CD4-positive, alpha-beta memory T cell (primary cell): ENCODE measurements at regions of chr17 and their contacts with region 1.

Region 1: GRCh38 chr17:14926526-14927122 is 338.5 kb downstream of the PMP22 start:
- DNase-seq: peak; percentile 48 to 55 (median 52)
- H3K4me3 ChIP-seq: no peak overlapping the region
- H3K4me3 Mint-ChIP-seq: no peak overlapping the region
- H3K27ac ChIP-seq: no peak overlapping the region
- H3K27ac Mint-ChIP-seq: no peak overlapping the region
- H3K4me1 ChIP-seq: no peaks in the 10 kb centered on the region
- H3K4me1 Mint-ChIP-seq: no peaks in the 10 kb centered on the region
- H3K27me3 ChIP-seq: no peaks in the 10 kb centered on the region
- H3K27me3 Mint-ChIP-seq: peaks cover 6 to 7% of the 10 kb centered on the region in 2 donors

Region 2: DNA sequence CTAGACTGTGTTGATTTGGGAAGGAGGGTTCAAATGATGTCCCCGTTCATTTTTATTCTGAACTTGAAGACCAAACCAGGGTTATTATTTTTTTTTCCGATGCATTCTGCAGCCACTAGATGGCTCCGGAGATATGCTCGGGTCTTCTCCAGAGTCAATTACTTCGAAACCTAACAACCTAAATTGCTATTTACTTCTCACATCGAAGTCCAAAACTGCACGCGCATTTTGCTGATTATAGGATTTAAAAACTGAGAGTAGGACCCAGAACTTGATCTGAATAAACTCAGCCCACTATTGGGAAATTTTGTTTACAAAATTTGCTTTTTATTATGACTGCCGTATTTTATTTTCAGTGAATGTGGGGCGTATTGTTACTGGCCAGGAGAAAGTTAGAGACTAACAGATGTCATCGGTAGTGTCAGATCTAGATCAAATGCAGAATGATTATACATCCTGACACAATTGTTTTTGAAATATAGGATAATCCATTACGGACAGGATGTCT is 1588.7 kb before region 1 on chr17:
- CTCF ChIA-PET with region 1: interaction called, 21 read pairs
- POLR2A ChIA-PET with region 1: no interaction called
- intact Hi-C with region 1: no loop called
- DNase-seq: peak in 4 of 5 donors; percentile 17 to 20 (median 18)
- H3K4me3 ChIP-seq: no peak overlapping the region
- H3K4me3 Mint-ChIP-seq: peak overlapping the region in 4 of 8 donors; percentile 1 to 49 (median 24)
- H3K27ac ChIP-seq: no peak overlapping the region
- H3K27ac Mint-ChIP-seq: no peak overlapping the region
- H3K4me1 ChIP-seq: peaks cover 4% of the 10 kb centered on the region
- H3K4me1 Mint-ChIP-seq: peaks cover 0 to 7% (median 2%) of the 10 kb centered on the region in 4 donors
- H3K27me3 ChIP-seq: no peaks in the 10 kb centered on the region
- H3K27me3 Mint-ChIP-seq: peaks cover 18 to 22% of the 10 kb centered on the region in 2 donors

Region 3: GRCh38 chr17:13587487-13588338 is 1338.9 kb before region 1 on chr17:
- CTCF ChIA-PET with region 1: interaction called, 49 read pairs
- POLR2A ChIA-PET with region 1: no interaction called
- intact Hi-C with region 1: no loop called
- DNase-seq: no peak
- H3K4me3 ChIP-seq: no peak overlapping the region
- H3K4me3 Mint-ChIP-seq: no peak overlapping the region
- H3K27ac ChIP-seq: no peak overlapping the region
- H3K27ac Mint-ChIP-seq: no peak overlapping the region
- H3K4me1 ChIP-seq: no peaks in the 10 kb centered on the region
- H3K4me1 Mint-ChIP-seq: peaks cover 0 to 3% (median 0%) of the 10 kb centered on the region in 4 donors
- H3K27me3 ChIP-seq: no peaks in the 10 kb centered on the region
- H3K27me3 Mint-ChIP-seq: peaks cover 8 to 11% of the 10 kb centered on the region in 2 donors

Region 4: DNA sequence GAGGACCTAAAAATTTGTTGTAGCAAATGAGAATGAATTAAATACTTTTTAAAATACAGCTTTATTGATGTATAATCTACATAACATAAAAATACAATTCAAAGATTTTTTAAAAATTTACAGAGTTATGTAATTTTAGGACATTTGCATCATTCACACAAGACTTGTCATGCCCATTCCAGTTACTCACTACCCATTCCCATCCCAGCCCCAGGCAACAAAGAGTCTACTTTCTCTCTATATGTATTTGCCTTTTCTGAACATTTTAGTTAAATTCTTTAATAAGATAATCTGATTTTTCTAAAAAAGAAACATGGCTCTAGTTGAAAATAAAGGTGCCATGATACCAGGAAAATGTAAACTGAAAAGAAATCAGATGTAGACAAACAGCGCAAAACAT is 15.7 kb before region 1 on chr17:
- CTCF ChIA-PET with region 1: no interaction called
- POLR2A ChIA-PET with region 1: no interaction called
- intact Hi-C with region 1: no loop called
- DNase-seq: no peak
- H3K4me3 ChIP-seq: no peak overlapping the region
- H3K4me3 Mint-ChIP-seq: no peak overlapping the region
- H3K27ac ChIP-seq: no peak overlapping the region
- H3K27ac Mint-ChIP-seq: no peak overlapping the region
- H3K4me1 ChIP-seq: no peaks in the 10 kb centered on the region
- H3K4me1 Mint-ChIP-seq: peaks cover 0 to 2% (median 0%) of the 10 kb centered on the region in 4 donors
- H3K27me3 ChIP-seq: no peaks in the 10 kb centered on the region
- H3K27me3 Mint-ChIP-seq: peaks cover 7 to 22% of the 10 kb centered on the region in 2 donors

Region 5: DNA sequence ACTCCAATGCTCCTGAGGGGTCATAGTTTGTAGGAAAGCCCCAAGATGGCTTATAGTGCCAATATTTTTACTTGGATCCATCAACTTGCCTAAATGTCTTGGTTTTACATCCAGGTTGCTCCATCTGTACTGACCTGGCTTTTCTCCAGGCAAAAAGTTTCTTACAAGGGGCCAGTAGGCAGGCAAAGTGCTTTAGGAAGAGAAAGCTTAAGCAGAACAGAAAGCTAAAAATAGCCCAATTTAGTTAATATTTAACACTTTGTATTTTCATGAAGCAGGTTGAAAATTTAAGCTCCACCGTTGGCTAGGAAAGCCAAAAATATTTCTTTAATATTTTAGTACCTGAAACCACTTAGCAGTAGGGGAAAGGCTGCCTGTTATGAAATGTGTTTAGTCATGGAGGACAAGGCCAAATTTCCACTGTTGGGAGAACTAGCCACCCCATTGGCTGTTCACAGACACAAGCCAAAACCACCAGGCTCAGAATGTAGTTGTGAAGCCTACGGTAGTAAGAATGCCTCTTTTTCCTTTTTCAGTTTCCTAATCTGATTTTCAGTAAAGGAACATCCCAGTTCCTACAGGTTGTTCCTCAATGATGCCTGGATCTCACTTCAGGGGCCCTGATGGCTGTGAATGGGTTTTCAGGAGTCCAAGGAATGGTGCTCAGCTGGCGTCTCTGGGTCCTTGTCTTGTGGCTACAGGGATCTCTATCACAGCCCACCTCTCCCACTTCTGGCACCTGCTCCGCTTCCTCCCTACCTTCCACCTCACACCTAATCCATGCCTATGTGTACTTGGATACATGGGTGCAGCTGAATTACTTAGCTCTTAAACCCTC is 13.7 kb after region 1 on chr17:
- CTCF ChIA-PET with region 1: interaction called, 17 read pairs
- POLR2A ChIA-PET with region 1: no interaction called
- intact Hi-C with region 1: no loop called
- DNase-seq: no peak
- H3K4me3 ChIP-seq: no peak overlapping the region
- H3K4me3 Mint-ChIP-seq: no peak overlapping the region
- H3K27ac ChIP-seq: no peak overlapping the region
- H3K27ac Mint-ChIP-seq: no peak overlapping the region
- H3K4me1 ChIP-seq: no peaks in the 10 kb centered on the region
- H3K4me1 Mint-ChIP-seq: no peaks in the 10 kb centered on the region
- H3K27me3 ChIP-seq: no peaks in the 10 kb centered on the region
- H3K27me3 Mint-ChIP-seq: peaks cover 12% of the 10 kb centered on the region in 2 donors

Region 6: GRCh38 chr17:15038656-15039055 is 112.0 kb after region 1 on chr17:
- CTCF ChIA-PET with region 1: no interaction called
- POLR2A ChIA-PET with region 1: no interaction called
- intact Hi-C with region 1: no loop called
- DNase-seq: no peak
- H3K4me3 ChIP-seq: no peak overlapping the region
- H3K4me3 Mint-ChIP-seq: no peak overlapping the region
- H3K27ac ChIP-seq: no peak overlapping the region
- H3K27ac Mint-ChIP-seq: no peak overlapping the region
- H3K4me1 ChIP-seq: no peaks in the 10 kb centered on the region
- H3K4me1 Mint-ChIP-seq: no peaks in the 10 kb centered on the region
- H3K27me3 ChIP-seq: no peaks in the 10 kb centered on the region
- H3K27me3 Mint-ChIP-seq: peaks cover 0 to 12% of the 10 kb centered on the region in 2 donors

Region 7: DNA sequence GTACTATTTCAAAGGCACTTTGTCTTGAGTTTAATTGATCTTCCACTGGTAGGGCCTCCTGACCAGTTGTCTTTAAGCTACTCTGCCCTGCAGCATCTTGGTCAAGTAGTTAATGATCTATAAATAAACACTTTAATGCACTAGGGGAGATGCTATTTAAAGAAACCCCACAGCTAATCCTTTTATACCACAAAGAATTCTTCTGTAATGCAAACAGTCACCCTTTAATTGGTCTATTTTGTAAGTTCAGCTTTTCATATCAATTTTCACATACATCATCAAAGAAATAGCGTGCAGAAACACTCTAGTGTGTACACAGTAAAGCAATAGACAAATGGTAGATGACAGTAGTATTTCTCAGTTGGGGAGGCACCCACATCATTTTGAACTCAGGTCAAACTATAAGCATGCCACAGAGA is 268.2 kb after region 1 on chr17:
- CTCF ChIA-PET with region 1: no interaction called
- POLR2A ChIA-PET with region 1: no interaction called
- intact Hi-C with region 1: no loop called
- DNase-seq: no peak
- H3K4me3 ChIP-seq: no peak overlapping the region
- H3K4me3 Mint-ChIP-seq: no peak overlapping the region
- H3K27ac ChIP-seq: no peak overlapping the region
- H3K27ac Mint-ChIP-seq: no peak overlapping the region
- H3K4me1 ChIP-seq: no peaks in the 10 kb centered on the region
- H3K4me1 Mint-ChIP-seq: no peaks in the 10 kb centered on the region
- H3K27me3 ChIP-seq: no peaks in the 10 kb centered on the region
- H3K27me3 Mint-ChIP-seq: peaks cover 12 to 15% of the 10 kb centered on the region in 2 donors